ENCODE measurements at regions of chr12 and their contacts with region 1.

Region 1: DNA sequence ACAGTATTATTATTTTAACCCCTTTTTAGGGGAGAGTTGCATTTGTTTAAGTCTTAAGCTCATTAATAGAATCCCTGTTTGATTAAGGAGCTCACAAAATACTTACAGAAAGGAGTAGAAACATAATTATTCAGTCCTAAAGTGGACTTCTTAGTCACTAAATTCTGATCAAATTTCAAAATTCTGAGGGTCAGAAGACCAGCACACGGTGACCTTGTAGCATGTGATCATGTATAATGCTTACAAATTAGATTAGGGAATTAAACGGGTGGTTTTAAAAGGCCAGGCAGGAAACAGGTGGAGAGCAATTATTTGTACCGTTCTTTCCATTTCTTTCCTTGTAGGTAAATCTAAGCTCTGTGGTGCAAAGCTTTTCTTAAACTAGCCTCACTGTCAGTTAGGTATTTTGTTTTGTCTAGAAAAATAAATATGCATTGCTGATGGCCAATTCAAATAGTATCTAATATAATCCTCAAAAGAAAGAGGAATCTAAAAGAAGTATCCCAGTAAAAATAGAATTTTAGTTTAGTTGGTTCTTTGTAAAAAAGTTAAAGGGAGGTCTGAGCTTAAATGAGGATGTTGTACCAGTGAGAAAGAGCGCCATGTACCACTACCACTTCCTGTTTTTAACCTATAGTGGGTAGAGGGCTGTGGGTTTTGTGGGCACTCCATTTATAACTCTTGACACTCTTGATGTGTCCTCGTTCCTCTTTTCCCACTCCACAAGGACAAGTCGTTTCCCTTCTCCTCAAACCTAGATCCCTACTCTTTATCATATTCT is 51.1 kb downstream of the SLC38A1 start:
- DNase-seq: peak; percentile 75
- H3K4me3 Mint-ChIP-seq: peak overlapping the region; percentile 61
- H3K27ac Mint-ChIP-seq: peak overlapping the region; percentile 98
- H3K4me1 Mint-ChIP-seq: peaks cover 95% of the 10 kb centered on the region
- H3K27me3 Mint-ChIP-seq: no peaks in the 10 kb centered on the region

Region 2: GRCh38 chr12:46082490-46083200 is 135.1 kb before region 1 on chr12:
- CTCF ChIA-PET with region 1: no interaction called
- POLR2A ChIA-PET with region 1: no interaction called
- intact Hi-C with region 1: no loop called
- DNase-seq: no peak
- H3K4me3 Mint-ChIP-seq: no peak overlapping the region
- H3K27ac Mint-ChIP-seq: no peak overlapping the region
- H3K4me1 Mint-ChIP-seq: no peaks in the 10 kb centered on the region
- H3K27me3 Mint-ChIP-seq: peaks cover 2% of the 10 kb centered on the region

Region 3: DNA sequence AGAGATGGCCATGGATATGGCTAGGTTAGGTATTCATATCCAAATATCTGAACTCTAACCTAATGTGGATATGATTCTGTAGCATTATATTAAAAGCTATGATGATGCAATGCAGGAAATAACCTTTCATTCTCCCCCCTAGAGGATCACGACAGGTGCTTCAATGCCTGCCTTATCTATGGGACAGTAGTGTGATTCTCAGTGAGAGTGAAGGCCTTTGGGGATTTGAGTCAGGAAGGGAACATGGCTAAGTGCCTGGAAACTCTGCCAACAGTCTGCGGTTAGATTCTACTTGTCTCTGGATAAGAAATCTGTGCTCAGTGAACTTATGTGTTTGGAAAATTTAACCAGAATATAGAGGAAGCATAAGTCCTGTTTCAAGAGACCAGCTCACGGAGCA is 30.7 kb before region 1 on chr12:
- CTCF ChIA-PET with region 1: no interaction called
- POLR2A ChIA-PET with region 1: no interaction called
- intact Hi-C with region 1: no loop called
- DNase-seq: no peak
- H3K4me3 Mint-ChIP-seq: no peak overlapping the region
- H3K27ac Mint-ChIP-seq: peak overlapping the region; percentile 73
- H3K4me1 Mint-ChIP-seq: peaks cover 23% of the 10 kb centered on the region
- H3K27me3 Mint-ChIP-seq: no peaks in the 10 kb centered on the region

Region 4: GRCh38 chr12:46230983-46231382 is 13.3 kb after region 1 on chr12:
- CTCF ChIA-PET with region 1: interaction called, 4 read pairs
- POLR2A ChIA-PET with region 1: interaction called, 8 read pairs
- intact Hi-C with region 1: loop called (anchors 1 kb)
- DNase-seq: no peak
- H3K4me3 Mint-ChIP-seq: no peak overlapping the region
- H3K27ac Mint-ChIP-seq: peak overlapping the region; percentile 69
- H3K4me1 Mint-ChIP-seq: peaks cover 57% of the 10 kb centered on the region
- H3K27me3 Mint-ChIP-seq: no peaks in the 10 kb centered on the region

Region 5: DNA sequence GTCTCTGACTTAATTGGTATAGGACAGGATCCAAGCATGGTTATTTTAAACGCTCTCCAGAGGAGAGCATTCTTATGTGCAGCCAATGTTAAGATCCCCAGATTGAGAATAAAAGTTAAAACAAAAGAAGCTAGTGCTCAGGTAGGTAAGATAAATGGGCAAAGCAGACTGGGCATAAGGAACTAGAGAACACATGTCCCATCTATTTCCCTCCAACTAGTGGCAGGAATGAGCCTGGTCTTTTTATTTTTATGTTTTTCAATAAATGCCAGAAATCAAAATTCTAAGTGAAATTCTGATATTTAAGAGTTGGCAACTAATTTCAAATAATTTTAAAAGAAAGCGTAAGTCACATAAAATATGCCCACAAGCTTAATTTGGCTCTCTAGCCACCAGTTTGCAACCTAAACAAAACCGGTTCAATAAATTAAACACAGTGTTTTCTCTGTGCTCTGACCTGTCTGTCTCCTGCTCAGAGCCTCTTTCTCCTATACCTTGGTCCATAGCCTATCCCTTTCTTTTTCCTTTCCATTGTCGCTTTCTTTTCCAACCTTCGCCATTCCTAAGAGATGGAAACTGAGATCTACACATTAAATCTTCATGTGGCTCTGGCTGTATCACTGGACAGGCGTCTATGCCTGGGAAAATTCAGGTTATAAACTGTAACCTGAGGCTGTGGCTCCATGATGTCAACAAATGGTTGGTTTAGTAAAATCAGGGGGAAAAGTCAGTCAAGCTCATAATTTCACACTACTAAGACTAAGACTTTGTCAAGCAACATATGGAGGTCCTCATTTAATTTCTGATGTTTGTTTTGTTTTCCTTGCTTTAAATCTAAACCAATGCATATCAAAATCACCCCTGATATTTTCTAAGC is 45.6 kb after region 1 on chr12:
- CTCF ChIA-PET with region 1: interaction called, 14 read pairs
- POLR2A ChIA-PET with region 1: interaction called, 177 read pairs
- intact Hi-C with region 1: loop called (anchors 1 kb)
- DNase-seq: no peak
- H3K4me3 Mint-ChIP-seq: peak overlapping the region; percentile 27
- H3K27ac Mint-ChIP-seq: peak overlapping the region; percentile 83
- H3K4me1 Mint-ChIP-seq: peaks cover 19% of the 10 kb centered on the region
- H3K27me3 Mint-ChIP-seq: no peaks in the 10 kb centered on the region

Measured in activated CD4-positive, alpha-beta memory T cell treated with anti-CD3 and anti-CD28 coated beads for 36 hours (primary cell).